HCT116 (cell line): ENCODE measurements at regions of chr12 and their contacts with region 1.

Region 1: GRCh38 chr12:100266835-100267618 is at the starts of genes DEPDC4 and SCYL2:
- DNase-seq: peak; percentile 92
- ATAC-seq: peak; percentile 90
- H3K4me3 ChIP-seq: peak within 1 kb of the TSS; percentile 79 to 92
- H3K27ac ChIP-seq: peak within 1 kb of the TSS; percentile 89
- H3K4me1 ChIP-seq: peaks cover 3 to 18% of the 10 kb centered on the region in 2 experiments; a peak in 3 of 4 replicates
- H3K27me3 ChIP-seq: no peaks in the 10 kb centered on the region
- CTCF ChIP-seq: no peak
- POLR2A ChIP-seq: peak; percentile 34
- RAD21 ChIP-seq: no peak
- total RNA-seq, gene DEPDC4: 3.4 TPM
- total RNA-seq, gene SCYL2: 31.7 TPM

Region 2: GRCh38 chr12:100200463-100201181 is 66.4 kb before region 1 on chr12 and contains the start of gene ACTR6:
- CTCF ChIA-PET with region 1: no interaction called
- POLR2A ChIA-PET with region 1: interaction called, 8 read pairs
- RAD21 ChIA-PET with region 1: interaction called in 1 of 2 experiments, 3 read pairs
- intact Hi-C with region 1: loop called (anchors 2 kb)
- DNase-seq: peak; percentile 92
- ATAC-seq: peak; percentile 80
- H3K4me3 ChIP-seq: peak within 1 kb of the TSS; percentile 84 to 94
- H3K27ac ChIP-seq: peak within 1 kb of the TSS; percentile 72
- H3K4me1 ChIP-seq: peaks cover 8 to 34% of the 10 kb centered on the region in 2 experiments
- H3K27me3 ChIP-seq: no peaks in the 10 kb centered on the region
- CTCF ChIP-seq: no peak
- POLR2A ChIP-seq: peak; percentile 91
- RAD21 ChIP-seq: no peak
- total RNA-seq, gene ACTR6: 40.4 TPM